ENCODE measurements at regions of chr7 and their contacts with region 1.

Region 1: DNA sequence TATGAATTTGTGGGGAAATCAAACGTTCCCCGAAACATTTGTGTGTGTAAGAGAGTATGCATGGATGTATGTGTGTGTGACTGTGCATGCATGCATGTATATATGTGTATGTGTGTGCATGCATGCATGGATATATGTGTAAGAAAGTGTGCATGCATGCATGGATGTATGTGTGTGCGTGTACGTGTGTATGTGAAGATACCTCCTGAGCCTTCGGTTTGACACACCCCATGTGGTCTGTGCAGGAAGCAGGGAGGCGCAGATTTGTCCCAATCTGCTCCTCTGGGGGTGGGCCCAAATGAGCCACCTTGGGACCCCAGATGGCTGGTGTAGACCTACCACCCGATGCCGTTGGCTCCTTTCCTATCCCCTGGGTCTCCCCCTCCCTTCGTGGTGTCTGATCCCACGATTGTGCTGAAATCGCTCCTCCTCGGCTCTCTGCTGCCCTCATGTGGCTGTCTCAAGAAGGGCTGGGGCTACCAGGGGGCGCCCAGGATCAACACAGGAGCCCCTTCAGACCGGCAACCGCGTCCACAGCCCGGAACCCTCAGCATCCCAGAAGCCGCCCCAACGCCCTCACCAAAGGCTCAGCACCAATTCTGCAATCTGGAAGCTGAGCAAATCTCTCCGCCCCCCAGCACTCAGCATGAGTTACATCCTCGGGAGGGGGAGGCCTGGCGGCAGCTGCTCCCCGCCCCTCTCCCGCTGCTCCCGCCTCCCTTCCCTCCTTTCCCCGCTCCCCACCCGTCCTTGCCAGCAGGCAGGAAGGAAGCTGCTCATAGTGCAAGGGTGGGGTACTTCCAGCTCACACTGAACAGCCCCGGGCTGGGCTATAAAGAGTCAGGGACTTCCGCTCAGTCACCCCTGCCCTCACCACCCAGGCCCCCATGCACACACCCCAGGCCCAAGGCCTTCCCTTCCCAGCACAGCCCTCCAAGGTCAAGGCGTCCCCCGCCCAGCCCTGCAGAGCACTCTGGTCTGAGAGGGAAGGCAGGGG is 2.3 kb upstream of the NOS3 start:
- DNase-seq: peak; percentile 58 to 91 (median 80)

Region 2: GRCh38 chr7:150787321-150788281 is 200.9 kb before region 1 on chr7:
- intact Hi-C with region 1: loop called (anchors 10 kb)
- DNase-seq: peak in 3 of 42 donors; percentile 13 to 31 (median 28)

Region 3: DNA sequence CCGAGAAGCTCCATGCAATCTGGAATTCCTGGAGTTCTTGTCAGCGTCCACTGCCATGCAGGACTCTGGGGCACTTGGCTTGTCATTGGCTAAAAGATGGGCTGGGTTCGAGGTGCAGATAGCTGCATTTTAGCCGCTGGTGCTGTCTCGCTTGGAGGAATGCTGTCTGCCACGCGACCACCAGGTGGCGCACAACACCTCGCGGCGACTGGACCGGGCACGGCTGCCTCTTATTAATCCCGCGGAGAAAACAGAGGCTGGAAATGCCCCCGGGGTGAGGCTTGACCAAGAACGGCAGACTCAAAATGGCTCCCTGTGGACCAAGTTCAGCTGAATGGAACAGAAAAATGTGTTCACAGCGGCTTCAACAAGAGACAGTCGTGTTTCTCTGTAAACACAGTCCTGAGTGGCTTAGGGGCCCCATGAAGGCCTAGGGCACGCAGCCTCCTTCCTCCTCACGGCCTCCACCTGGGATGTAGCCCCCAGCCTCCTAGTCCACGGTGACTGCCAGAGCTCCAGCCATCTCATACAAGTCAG is 90.0 kb before region 1 on chr7:
- intact Hi-C with region 1: loop called (anchors 2 kb)
- DNase-seq: peak; percentile 50 to 95 (median 88)

Region 4: GRCh38 chr7:150962553-150963399 is 25.8 kb before region 1 on chr7:
- intact Hi-C with region 1: loop called (anchors 2 kb)
- DNase-seq: peak; percentile 55 to 88 (median 75)

Region 5: GRCh38 chr7:151091431-151091830 is 102.9 kb after region 1 on chr7:
- intact Hi-C with region 1: no loop called
- DNase-seq: no peak